B cell (primary cell): ENCODE measurements at regions of chr21 and their contacts with region 1.

Region 1: GRCh38 chr21:20570824-20571232 is 427.4 kb upstream of the NCAM2 start:
- DNase-seq: no peak
- ATAC-seq: no peak
- H3K4me3 ChIP-seq: no peak overlapping the region
- H3K4me3 Mint-ChIP-seq: no peak overlapping the region
- H3K27ac ChIP-seq: no peak overlapping the region
- H3K27ac Mint-ChIP-seq: no peak overlapping the region
- H3K4me1 ChIP-seq: no peaks in the 10 kb centered on the region
- H3K4me1 Mint-ChIP-seq: no peaks in the 10 kb centered on the region
- H3K27me3 ChIP-seq: no peaks in the 10 kb centered on the region
- H3K27me3 Mint-ChIP-seq: no peaks in the 10 kb centered on the region
- CTCF ChIP-seq: no peak

Region 2: DNA sequence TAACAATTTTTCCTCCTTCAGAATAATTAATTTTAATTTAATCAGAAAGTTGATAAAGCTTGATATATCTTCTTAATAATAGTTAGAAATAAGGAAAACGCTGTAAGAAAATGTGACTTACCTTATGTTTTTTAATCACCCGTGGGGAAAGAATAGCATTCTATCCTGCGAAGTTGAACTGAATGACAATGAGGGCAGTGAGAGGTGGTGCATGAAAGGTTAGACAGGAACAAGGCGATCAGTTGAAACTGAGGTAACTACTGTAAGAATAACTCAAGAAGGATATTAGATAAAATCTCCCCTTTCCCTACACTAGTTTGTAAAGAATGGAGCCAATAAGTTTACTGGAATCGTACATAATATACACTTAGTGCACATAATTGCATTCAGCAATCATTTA is 227.6 kb before region 1 on chr21:
- CTCF ChIA-PET with region 1: no interaction called
- POLR2A ChIA-PET with region 1: no interaction called
- intact Hi-C with region 1: no loop called
- DNase-seq: no peak
- ATAC-seq: no peak
- H3K4me3 ChIP-seq: no peak overlapping the region
- H3K4me3 Mint-ChIP-seq: no peak overlapping the region
- H3K27ac ChIP-seq: no peak overlapping the region
- H3K27ac Mint-ChIP-seq: no peak overlapping the region
- H3K4me1 ChIP-seq: no peaks in the 10 kb centered on the region
- H3K4me1 Mint-ChIP-seq: no peaks in the 10 kb centered on the region
- H3K27me3 ChIP-seq: no peaks in the 10 kb centered on the region
- H3K27me3 Mint-ChIP-seq: no peaks in the 10 kb centered on the region
- CTCF ChIP-seq: no peak

Region 3: DNA sequence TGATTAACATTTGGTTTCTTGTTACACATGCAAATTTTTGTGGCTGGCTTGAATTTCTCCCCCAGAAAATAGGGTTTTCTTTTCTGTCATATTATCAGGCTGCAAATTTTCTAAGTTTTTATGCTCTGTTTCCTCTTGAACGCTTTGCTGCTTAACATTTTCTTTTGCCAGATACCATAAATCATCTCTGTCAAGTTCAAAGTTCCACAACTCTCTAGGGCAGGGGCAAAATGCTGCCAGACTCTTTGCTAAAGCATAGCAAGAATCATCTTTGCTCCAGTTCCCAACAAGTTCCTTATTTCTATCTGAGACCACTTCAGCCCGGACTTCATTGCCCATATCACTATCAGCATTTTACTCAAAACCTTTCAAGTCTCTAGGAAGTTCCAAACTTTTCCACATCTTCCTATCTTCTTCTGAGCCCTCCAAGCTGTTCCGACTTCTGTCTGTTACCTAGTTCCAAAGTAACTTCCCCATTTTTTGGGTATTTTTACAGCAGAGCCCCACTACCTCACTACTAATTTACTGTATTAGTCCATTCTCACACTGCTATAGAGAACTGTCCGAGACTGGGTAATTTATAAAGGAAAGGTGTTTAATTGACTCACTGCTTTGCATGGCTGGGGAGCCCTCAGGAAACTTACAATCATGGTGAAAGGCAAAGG is 59.5 kb before region 1 on chr21:
- CTCF ChIA-PET with region 1: no interaction called
- POLR2A ChIA-PET with region 1: no interaction called
- intact Hi-C with region 1: loop called (anchors 10 kb)
- DNase-seq: no peak
- ATAC-seq: no peak
- H3K4me3 ChIP-seq: no peak overlapping the region
- H3K4me3 Mint-ChIP-seq: no peak overlapping the region
- H3K27ac ChIP-seq: no peak overlapping the region
- H3K27ac Mint-ChIP-seq: no peak overlapping the region
- H3K4me1 ChIP-seq: no peaks in the 10 kb centered on the region
- H3K4me1 Mint-ChIP-seq: no peaks in the 10 kb centered on the region
- H3K27me3 ChIP-seq: no peaks in the 10 kb centered on the region
- H3K27me3 Mint-ChIP-seq: no peaks in the 10 kb centered on the region
- CTCF ChIP-seq: no peak